Left cardiac atrium (tissue), 4 donors: ENCODE measurements at regions of chr6 and their contacts with region 1.

Region 1: DNA sequence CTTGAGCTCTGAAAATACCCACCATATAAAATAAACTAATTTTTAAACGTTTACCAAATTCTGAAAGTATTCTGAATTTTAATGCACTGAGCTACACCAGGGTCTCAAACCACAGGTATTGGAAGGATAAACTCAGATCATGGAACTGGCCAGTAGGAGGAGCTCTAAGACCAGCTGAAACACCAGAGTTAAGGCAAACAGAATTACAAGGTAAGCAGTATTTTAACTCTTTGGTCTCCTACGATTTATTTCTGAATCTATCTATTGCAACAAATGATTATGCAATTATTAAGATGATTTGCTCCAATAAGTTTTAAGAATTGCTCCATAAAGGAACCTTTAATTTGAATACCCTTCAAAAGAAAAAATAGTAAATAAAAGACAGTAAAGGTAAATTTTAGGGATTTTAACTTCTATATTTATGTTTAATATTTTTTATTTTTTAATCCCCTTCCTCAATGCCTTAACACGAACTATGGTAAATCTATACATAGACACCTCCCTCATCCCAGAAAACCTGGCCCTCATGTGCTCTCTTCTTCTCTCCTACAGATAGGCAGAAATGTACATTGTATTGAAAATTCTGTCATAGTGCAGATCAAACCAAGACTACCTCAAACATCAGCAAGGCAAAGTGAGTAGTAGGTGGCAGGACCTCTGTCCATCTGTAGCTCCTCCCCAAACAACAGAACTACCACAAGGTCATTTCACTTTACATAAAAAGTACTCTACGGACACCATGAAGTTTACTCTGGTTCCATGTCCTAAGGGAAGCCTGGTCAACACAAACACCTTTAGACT is 58.4 kb downstream of the SMLR1 start:
- DNase-seq: peak; percentile 51
- ATAC-seq: peak; percentile 87 to 90

Region 2: GRCh38 chr6:131063028-131063763 is 177.6 kb after region 1 on chr6 and contains the start of gene EPB41L2:
- intact Hi-C with region 1: loop called in 1 of 2 experiments (anchors 5 kb)
- DNase-seq: peak; percentile 89
- ATAC-seq: peak; percentile 98
- total RNA-seq, gene EPB41L2: 83.3 to 130 TPM

Region 3: GRCh38 chr6:131116749-131117360 is 231.3 kb after region 1 on chr6:
- intact Hi-C with region 1: loop called (anchors 2 to 5 kb)
- DNase-seq: no peak
- ATAC-seq: no peak

Region 4: DNA sequence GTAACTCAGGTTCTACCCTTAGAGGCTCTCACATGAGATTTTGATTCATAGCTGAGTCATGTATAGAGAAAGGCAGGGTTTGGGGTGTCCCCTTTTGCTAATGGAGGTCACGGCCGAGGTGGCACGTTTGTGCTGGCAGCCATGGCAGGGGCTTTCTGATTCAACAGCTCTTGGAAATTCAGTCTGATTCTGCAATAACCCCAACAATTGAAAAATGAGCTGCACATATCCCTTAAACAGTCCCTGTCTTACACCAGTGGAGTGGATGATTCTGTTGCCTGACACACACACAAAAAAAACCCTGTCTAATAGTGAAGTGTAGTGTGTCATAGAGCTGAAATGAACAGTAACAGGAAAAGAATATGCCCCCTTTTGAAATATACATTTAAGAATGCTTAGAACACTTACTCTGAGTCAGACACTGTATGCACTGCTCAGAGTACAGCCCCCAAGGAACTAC is 647.0 kb after region 1 on chr6:
- intact Hi-C with region 1: loop called in 1 of 2 experiments (anchors 1 kb)
- DNase-seq: no peak
- ATAC-seq: no peak